CD4-positive, alpha-beta T cell (primary cell): ENCODE measurements at regions of chr11 and their contacts with region 1.

Region 1: GRCh38 chr11:10792398-10792975 is 16.2 kb downstream of the EIF4G2 start:
- DNase-seq: peak; percentile 72 to 90 (median 80)
- ATAC-seq: peak; percentile 85
- H3K4me3 ChIP-seq: no peak overlapping the region
- H3K4me3 Mint-ChIP-seq: no peak overlapping the region
- H3K27ac ChIP-seq: no peak overlapping the region
- H3K27ac Mint-ChIP-seq: no peak overlapping the region
- H3K4me1 ChIP-seq: peaks cover 19% of the 10 kb centered on the region
- H3K4me1 Mint-ChIP-seq: peaks cover 32% of the 10 kb centered on the region
- H3K27me3 ChIP-seq: no peaks in the 10 kb centered on the region
- H3K27me3 Mint-ChIP-seq: no peaks in the 10 kb centered on the region
- CTCF ChIP-seq: peak; percentile 95

Region 2: GRCh38 chr11:10770626-10771254 is 21.7 kb before region 1 on chr11:
- CTCF ChIA-PET with region 1: interaction called, 19 read pairs
- POLR2A ChIA-PET with region 1: no interaction called
- intact Hi-C with region 1: no loop called
- DNase-seq: peak in 6 of 14 experiments; percentile 12 to 43 (median 34)
- ATAC-seq: no peak
- H3K4me3 ChIP-seq: no peak overlapping the region
- H3K4me3 Mint-ChIP-seq: no peak overlapping the region
- H3K27ac ChIP-seq: no peak overlapping the region
- H3K27ac Mint-ChIP-seq: no peak overlapping the region
- H3K4me1 ChIP-seq: no peaks in the 10 kb centered on the region
- H3K4me1 Mint-ChIP-seq: no peaks in the 10 kb centered on the region
- H3K27me3 ChIP-seq: no peaks in the 10 kb centered on the region
- H3K27me3 Mint-ChIP-seq: no peaks in the 10 kb centered on the region
- CTCF ChIP-seq: peak; percentile 58

Region 3: GRCh38 chr11:10878408-10879214 is 86.1 kb after region 1 on chr11:
- CTCF ChIA-PET with region 1: interaction called, 11 read pairs
- POLR2A ChIA-PET with region 1: no interaction called
- intact Hi-C with region 1: no loop called
- DNase-seq: peak in 4 of 14 experiments; percentile 44 to 83 (median 78)
- ATAC-seq: peak; percentile 87
- H3K4me3 ChIP-seq: no peak overlapping the region
- H3K4me3 Mint-ChIP-seq: no peak overlapping the region
- H3K27ac ChIP-seq: no peak overlapping the region
- H3K27ac Mint-ChIP-seq: no peak overlapping the region
- H3K4me1 ChIP-seq: peaks cover 7% of the 10 kb centered on the region
- H3K4me1 Mint-ChIP-seq: peaks cover 10% of the 10 kb centered on the region
- H3K27me3 ChIP-seq: no peaks in the 10 kb centered on the region
- H3K27me3 Mint-ChIP-seq: no peaks in the 10 kb centered on the region
- CTCF ChIP-seq: peak; percentile 77

Region 4: DNA sequence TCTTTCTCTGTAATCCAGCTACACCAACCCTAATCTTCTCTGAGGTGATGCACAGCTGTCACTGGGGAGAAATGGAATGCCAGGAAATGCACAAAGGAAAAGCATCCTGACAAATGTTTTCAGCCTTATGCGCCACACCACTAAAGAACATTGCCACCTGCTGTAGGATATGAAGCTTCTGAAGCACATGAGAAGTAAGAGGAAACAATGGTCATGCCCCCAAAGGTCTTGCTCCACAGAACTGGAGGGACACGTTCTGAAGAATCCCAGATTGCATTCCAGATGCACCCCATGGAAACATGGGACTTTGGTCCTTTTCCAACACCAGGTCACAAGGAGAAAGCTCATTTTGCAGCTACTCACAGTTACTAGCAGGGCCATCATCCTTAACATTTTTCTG is 114.0 kb after region 1 on chr11:
- CTCF ChIA-PET with region 1: interaction called, 18 read pairs
- POLR2A ChIA-PET with region 1: interaction called, 4 read pairs
- intact Hi-C with region 1: loop called in 1 of 2 experiments (anchors 2 kb)
- DNase-seq: no peak
- ATAC-seq: no peak
- H3K4me3 ChIP-seq: no peak overlapping the region
- H3K4me3 Mint-ChIP-seq: no peak overlapping the region
- H3K27ac ChIP-seq: no peak overlapping the region
- H3K27ac Mint-ChIP-seq: no peak overlapping the region
- H3K4me1 ChIP-seq: no peaks in the 10 kb centered on the region
- H3K4me1 Mint-ChIP-seq: no peaks in the 10 kb centered on the region
- H3K27me3 ChIP-seq: no peaks in the 10 kb centered on the region
- H3K27me3 Mint-ChIP-seq: peaks cover 5% of the 10 kb centered on the region
- CTCF ChIP-seq: no peak

Region 5: GRCh38 chr11:11022125-11022730 is 229.7 kb after region 1 on chr11:
- CTCF ChIA-PET with region 1: interaction called, 15 read pairs
- POLR2A ChIA-PET with region 1: interaction called, 4 read pairs
- intact Hi-C with region 1: loop called (anchors 1 kb)
- DNase-seq: peak in 4 of 14 experiments; percentile 41 to 61 (median 52)
- ATAC-seq: peak; percentile 49
- H3K4me3 ChIP-seq: no peak overlapping the region
- H3K4me3 Mint-ChIP-seq: no peak overlapping the region
- H3K27ac ChIP-seq: no peak overlapping the region
- H3K27ac Mint-ChIP-seq: no peak overlapping the region
- H3K4me1 ChIP-seq: no peaks in the 10 kb centered on the region
- H3K4me1 Mint-ChIP-seq: no peaks in the 10 kb centered on the region
- H3K27me3 ChIP-seq: no peaks in the 10 kb centered on the region
- H3K27me3 Mint-ChIP-seq: no peaks in the 10 kb centered on the region
- CTCF ChIP-seq: peak; percentile 66

Region 6: GRCh38 chr11:11265994-11266606 is 473.6 kb after region 1 on chr11:
- CTCF ChIA-PET with region 1: no interaction called
- POLR2A ChIA-PET with region 1: no interaction called
- intact Hi-C with region 1: loop called in 1 of 2 experiments (anchors 10 kb)
- DNase-seq: peak; percentile 29 to 73 (median 50)
- ATAC-seq: peak; percentile 63
- H3K4me3 ChIP-seq: no peak overlapping the region
- H3K4me3 Mint-ChIP-seq: no peak overlapping the region
- H3K27ac ChIP-seq: no peak overlapping the region
- H3K27ac Mint-ChIP-seq: no peak overlapping the region
- H3K4me1 ChIP-seq: no peaks in the 10 kb centered on the region
- H3K4me1 Mint-ChIP-seq: no peaks in the 10 kb centered on the region
- H3K27me3 ChIP-seq: no peaks in the 10 kb centered on the region
- H3K27me3 Mint-ChIP-seq: peaks cover 2% of the 10 kb centered on the region
- CTCF ChIP-seq: peak; percentile 60